ENCODE measurements at regions of chr1 and their contacts with region 1.

Region 1: GRCh38 chr1:5745776-5746610 is 246.2 kb downstream of the NPHP4 start:
- DNase-seq: peak in 9 of 10 donors; percentile 63 to 96 (median 73)

Region 2: DNA sequence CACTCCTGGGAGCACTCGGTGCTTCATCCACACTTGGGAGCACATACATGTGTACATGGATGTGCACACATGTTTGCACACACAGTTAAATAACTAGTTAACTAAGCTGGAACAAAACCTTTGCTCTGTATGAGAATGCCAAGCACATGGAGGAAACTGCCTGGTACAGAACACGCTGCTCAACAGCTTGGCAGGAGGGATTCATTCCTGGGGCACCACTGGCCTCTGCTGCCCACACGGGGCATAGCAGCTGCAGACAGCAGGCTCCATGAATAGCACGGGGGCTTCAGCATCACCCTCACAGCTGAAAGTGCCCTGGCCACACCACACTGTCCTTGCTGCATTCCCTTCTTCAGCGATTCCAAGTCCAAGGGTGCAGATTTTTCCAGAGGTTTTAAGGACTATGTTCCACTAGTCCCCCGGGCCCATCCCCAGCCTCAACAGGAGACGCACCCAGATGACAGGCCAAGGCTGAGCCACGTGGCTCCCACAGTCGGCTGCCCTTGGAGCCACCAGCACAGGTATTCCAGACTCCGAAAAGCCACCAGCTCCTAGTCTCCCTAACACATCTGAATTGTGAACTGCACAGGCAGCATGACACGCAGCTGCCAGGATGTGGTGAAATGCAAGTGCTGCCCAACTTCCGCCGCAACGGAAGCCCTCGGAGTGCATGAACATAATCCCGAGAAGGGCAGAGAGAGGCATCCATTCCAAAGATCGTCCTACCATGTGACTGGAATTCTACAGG is 229.3 kb after region 1 on chr1:
- intact Hi-C with region 1: loop called (anchors 10 kb)
- DNase-seq: peak in 9 of 10 donors; percentile 59 to 96 (median 73)

Measured in posterior cingulate gyrus (tissue), 11 donors.